Esophagus squamous epithelium (tissue), 5 donors: ENCODE measurements at regions of chr14 and their contacts with region 1.

Region 1: GRCh38 chr14:67166450-67166853 is 22.8 kb upstream of the GARIN2 start:
- DNase-seq: no peak
- H3K4me3 ChIP-seq: no peak overlapping the region
- H3K27ac ChIP-seq: no peak overlapping the region
- H3K4me1 ChIP-seq: no peaks in the 10 kb centered on the region
- H3K27me3 ChIP-seq: no peaks in the 10 kb centered on the region
- CTCF ChIP-seq: peak; percentile 63 to 81 (median 68)
- POLR2A ChIP-seq: no peak

Region 2: GRCh38 chr14:67285876-67286452 is 119.5 kb after region 1 on chr14:
- intact Hi-C with region 1: loop called (anchors 5 kb)
- DNase-seq: no peak
- H3K4me3 ChIP-seq: no peak overlapping the region
- H3K27ac ChIP-seq: no peak overlapping the region
- H3K4me1 ChIP-seq: no peaks in the 10 kb centered on the region
- H3K27me3 ChIP-seq: no peaks in the 10 kb centered on the region
- CTCF ChIP-seq: peak; percentile 19 to 58 (median 51)
- POLR2A ChIP-seq: no peak